ENCODE measurements at regions of chr15 and their contacts with region 1.

Region 1: GRCh38 chr15:65028921-65029735 is at the start of gene MTFMT:
- DNase-seq: peak; percentile 41 to 81
- H3K4me3 ChIP-seq: peak within 1 kb of the TSS; percentile 88
- H3K27ac ChIP-seq: no peak within 1 kb of the TSS
- H3K4me1 ChIP-seq: peaks cover 10% of the 10 kb centered on the region; the same call in 1 of the 2 replicates
- H3K27me3 ChIP-seq: no peaks in the 10 kb centered on the region
- CTCF ChIP-seq: no peak
- total RNA-seq, gene MTFMT: 16.0 and 24.9 TPM in 2 replicates

Region 2: DNA sequence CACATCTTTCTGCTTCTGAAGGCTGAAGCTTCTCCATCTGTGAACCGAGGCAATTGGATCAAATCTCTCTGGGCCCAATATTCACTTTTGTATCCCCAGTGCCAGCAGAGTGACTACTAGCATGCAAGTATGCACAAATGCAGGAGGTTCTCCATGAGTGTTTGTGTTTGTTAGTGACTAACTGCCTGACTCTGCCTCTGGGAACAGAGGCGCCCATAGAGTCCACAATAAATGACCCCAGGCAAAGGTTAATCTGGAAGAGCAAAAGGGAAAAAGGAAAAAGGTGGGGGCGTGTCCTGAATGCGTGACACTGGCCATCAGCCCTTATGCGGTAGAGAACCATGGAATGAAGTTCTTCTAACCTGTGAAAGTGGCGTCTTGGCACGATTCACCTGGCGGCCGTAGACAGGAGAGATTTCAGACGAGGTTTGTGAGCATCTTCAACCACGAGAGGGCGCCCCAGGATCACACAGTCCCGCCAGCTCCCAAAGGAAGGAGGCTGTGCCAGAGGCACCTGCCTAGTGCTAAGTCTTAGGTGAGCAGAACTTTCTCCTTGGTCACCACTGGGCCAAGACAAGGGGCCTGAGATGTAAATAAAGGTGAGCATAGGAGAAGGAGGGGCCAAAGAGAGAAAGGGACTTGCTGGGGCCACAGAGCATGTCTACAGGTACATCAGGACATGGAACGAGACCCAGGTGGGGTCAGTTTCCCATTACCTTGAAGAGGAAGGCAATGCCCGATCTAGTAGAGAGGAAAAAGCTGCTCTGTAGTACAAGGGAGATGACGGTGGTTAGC is 297.9 kb before region 1 on chr15:
- CTCF ChIA-PET with region 1: no interaction called
- POLR2A ChIA-PET with region 1: no interaction called
- intact Hi-C with region 1: loop called (anchors 2 kb)
- DNase-seq: peak; percentile 65 to 88
- H3K4me3 ChIP-seq: no peak overlapping the region
- H3K27ac ChIP-seq: no peak overlapping the region
- H3K4me1 ChIP-seq: no peaks in the 10 kb centered on the region
- H3K27me3 ChIP-seq: no peaks in the 10 kb centered on the region
- CTCF ChIP-seq: peak; percentile 84

Region 3: GRCh38 chr15:64856429-64857145 is 172.5 kb before region 1 on chr15:
- CTCF ChIA-PET with region 1: no interaction called
- POLR2A ChIA-PET with region 1: no interaction called
- intact Hi-C with region 1: no loop called
- DNase-seq: no peak
- H3K4me3 ChIP-seq: no peak overlapping the region
- H3K27ac ChIP-seq: no peak overlapping the region
- H3K4me1 ChIP-seq: no peaks in the 10 kb centered on the region
- H3K27me3 ChIP-seq: no peaks in the 10 kb centered on the region
- CTCF ChIP-seq: no peak

Region 4: GRCh38 chr15:65086017-65086679 is 57.0 kb after region 1 on chr15:
- CTCF ChIA-PET with region 1: interaction called, 3 read pairs
- POLR2A ChIA-PET with region 1: no interaction called
- intact Hi-C with region 1: loop called (anchors 1 kb)
- DNase-seq: peak in 1 of 2 experiments; percentile 46
- H3K4me3 ChIP-seq: no peak overlapping the region
- H3K27ac ChIP-seq: no peak overlapping the region
- H3K4me1 ChIP-seq: no peaks in the 10 kb centered on the region
- H3K27me3 ChIP-seq: peaks cover 3% of the 10 kb centered on the region; the same call in 1 of the 2 replicates
- CTCF ChIP-seq: peak; percentile 72

Region 5: DNA sequence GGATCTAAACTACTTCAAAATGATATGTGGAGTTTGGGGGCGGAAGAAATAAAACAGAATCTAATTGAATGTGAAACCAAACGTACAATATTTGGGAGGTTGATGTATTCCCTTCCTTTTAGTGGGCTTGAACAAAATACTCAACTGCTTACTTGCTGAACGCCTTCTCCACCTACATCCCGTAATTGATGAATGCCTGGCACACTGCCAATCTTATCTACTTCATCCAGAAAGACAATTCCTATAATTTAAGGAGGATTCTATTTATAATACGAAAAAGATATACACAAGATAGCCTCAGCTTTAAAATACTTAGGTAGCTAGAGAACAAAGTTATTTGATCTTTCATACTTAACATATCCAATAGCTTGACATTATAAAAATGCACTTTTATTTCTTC is 127.6 kb after region 1 on chr15:
- CTCF ChIA-PET with region 1: no interaction called
- POLR2A ChIA-PET with region 1: no interaction called
- intact Hi-C with region 1: no loop called
- DNase-seq: no peak
- H3K4me3 ChIP-seq: no peak overlapping the region
- H3K27ac ChIP-seq: no peak overlapping the region
- H3K4me1 ChIP-seq: no peaks in the 10 kb centered on the region
- H3K27me3 ChIP-seq: no peaks in the 10 kb centered on the region
- CTCF ChIP-seq: no peak

Region 6: DNA sequence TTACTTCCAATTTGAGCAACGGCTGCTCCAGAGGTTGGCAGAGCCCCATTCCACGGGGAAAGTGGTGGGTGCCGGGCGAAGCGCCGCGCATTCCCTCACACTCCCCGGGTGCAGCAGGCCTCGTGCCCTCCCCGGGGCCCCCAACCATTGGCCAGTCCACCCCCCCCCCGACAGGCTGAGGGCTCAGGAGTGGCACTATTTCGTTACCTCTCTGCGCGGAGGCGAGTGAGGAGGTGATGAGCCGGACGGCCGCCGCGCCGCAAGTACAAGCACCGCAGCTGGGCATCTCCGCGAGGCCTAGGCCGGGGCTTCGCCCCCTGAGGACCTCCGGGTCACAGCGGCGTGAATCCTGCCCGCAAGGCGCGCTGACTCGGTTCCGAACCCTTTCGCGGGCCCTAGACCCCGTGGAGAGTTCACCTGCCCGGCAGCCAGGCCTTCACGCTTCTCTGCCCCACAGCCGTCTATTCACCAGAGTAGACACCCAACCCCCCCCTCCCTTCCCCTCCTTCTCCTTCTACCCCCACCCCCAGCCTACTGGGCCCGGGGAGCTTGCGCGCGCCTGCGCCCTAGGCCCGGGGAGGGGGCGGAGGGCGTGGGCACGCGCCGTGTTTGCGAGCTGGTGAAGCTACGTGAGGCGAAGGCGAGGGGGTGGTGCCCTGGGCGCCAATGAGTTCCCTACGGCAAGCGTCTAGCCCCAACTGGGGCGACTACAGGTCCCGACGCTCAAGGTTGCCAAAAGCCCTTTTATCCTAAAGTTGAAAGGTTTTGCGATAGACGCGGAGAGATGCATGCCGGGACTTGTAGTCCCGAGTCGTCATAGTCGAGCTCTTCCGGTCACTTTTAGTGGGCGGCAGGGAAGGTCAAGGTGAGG is 156.0 kb after region 1 on chr15 and contains the start of gene CLPX:
- CTCF ChIA-PET with region 1: no interaction called
- POLR2A ChIA-PET with region 1: no interaction called
- intact Hi-C with region 1: loop called (anchors 5 kb)
- DNase-seq: peak; percentile 85 to 89
- H3K4me3 ChIP-seq: peak within 1 kb of the TSS; percentile 96
- H3K27ac ChIP-seq: peak within 1 kb of the TSS; percentile 69
- H3K4me1 ChIP-seq: no peaks in the 10 kb centered on the region
- H3K27me3 ChIP-seq: no peaks in the 10 kb centered on the region
- CTCF ChIP-seq: no peak
- total RNA-seq, gene CLPX: 41.0 and 44.1 TPM in 2 replicates

Region 7: DNA sequence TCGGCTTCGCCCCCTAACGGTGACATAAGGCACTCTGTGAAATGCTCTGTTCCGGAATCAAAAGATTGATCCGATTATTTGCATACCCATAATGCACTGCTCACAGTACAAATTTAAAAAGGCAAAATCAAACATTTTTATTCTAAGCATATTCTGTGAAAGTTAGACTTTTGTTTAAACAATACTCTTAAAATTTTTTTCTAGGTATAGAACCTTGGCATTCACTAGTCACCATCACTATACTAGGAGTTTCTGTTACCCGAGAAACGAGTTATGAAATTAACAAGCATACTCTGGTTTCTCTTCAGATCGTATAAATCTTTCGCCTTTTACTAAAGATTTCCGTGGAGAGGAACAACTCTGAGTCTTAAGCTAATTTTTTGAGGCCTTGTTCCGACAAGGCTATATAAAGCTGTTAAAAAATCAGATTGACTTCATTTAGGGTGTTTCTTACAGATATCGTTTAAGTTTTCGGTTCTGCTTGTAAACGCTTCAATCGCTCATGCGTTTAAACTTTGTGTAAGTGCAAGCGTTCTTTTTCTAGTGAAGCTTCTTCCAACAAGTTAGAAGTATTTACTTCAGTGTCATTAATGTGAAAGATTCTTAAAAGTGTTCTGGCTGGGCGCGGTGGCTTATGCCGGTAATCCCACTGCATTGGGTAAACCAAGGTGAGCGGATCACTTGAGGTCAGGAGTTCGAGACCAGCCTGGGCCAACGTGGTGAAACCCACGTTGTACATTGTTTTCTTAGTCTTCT is 275.4 kb after region 1 on chr15 and contains the start of gene RNU5B-1:
- CTCF ChIA-PET with region 1: no interaction called
- POLR2A ChIA-PET with region 1: interaction called, 7 read pairs
- intact Hi-C with region 1: loop called (anchors 2 kb)
- DNase-seq: peak; percentile 85 to 96
- H3K4me3 ChIP-seq: peak within 1 kb of the TSS; percentile 57
- H3K27ac ChIP-seq: peak within 1 kb of the TSS; percentile 95
- H3K4me1 ChIP-seq: peaks cover 9% of the 10 kb centered on the region; the same call in 1 of the 2 replicates
- H3K27me3 ChIP-seq: no peaks in the 10 kb centered on the region
- CTCF ChIP-seq: no peak; the same call in 1 of the 2 replicates
- total RNA-seq, gene RNU5B-1: not detected in 2 replicates

Region 8: GRCh38 chr15:65690173-65690572 is 661.0 kb after region 1 on chr15:
- CTCF ChIA-PET with region 1: no interaction called
- POLR2A ChIA-PET with region 1: interaction called, 15 read pairs
- intact Hi-C with region 1: no loop called
- DNase-seq: no peak
- H3K4me3 ChIP-seq: no peak overlapping the region
- H3K27ac ChIP-seq: no peak overlapping the region
- H3K4me1 ChIP-seq: no peaks in the 10 kb centered on the region
- H3K27me3 ChIP-seq: no peaks in the 10 kb centered on the region
- CTCF ChIP-seq: no peak

Measured in PC-9 (cell line).